Naive thymus-derived CD4-positive, alpha-beta T cell (primary cell): ENCODE measurements at regions of chr1 and their contacts with region 1.

Region 1: GRCh38 chr1:58783993-58784757 is at the start of gene JUN:
- DNase-seq: peak; percentile 94 to 100 (median 98)
- ATAC-seq: peak; percentile 82
- H3K4me3 ChIP-seq: peak within 1 kb of the TSS; percentile 97
- H3K4me3 Mint-ChIP-seq: peak within 1 kb of the TSS; percentile 91 to 100 (median 95)
- H3K27ac ChIP-seq: peak within 1 kb of the TSS; percentile 95
- H3K27ac Mint-ChIP-seq: peak within 1 kb of the TSS; percentile 98 to 100 (median 100)
- H3K4me1 ChIP-seq: peaks cover 13 to 16% of the 10 kb centered on the region in 2 donors
- H3K4me1 Mint-ChIP-seq: peaks cover 7 to 49% (median 33%) of the 10 kb centered on the region in 7 donors
- H3K27me3 ChIP-seq: peaks cover 0 to 4% of the 10 kb centered on the region in 2 donors
- H3K27me3 Mint-ChIP-seq: peaks cover 0 to 5% (median 3%) of the 10 kb centered on the region in 5 donors
- total RNA-seq, gene JUN: 17.9 to 1,362 (median 41.2) TPM

Region 2: DNA sequence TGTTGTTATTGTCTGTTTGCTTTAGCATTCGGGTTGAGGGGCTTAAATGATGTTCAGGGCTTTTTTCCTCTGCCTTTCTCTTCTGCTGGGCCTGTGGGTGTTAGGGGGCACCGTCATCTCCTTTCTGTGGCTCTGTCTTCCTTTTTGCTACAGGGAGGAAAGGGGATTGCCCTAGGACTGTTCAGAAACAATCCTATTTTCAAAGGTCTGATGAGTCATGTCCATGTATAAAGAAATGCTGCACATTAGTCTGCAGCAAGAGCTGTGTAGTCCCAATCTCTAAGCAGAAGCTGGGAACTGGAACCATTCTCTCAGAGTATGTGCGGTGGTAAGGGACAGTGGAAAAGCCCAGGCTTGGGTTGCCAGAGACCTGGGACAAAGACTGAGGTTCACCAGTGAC is 699.9 kb before region 1 on chr1:
- CTCF ChIA-PET with region 1: no interaction called
- POLR2A ChIA-PET with region 1: no interaction called
- intact Hi-C with region 1: no loop called
- DNase-seq: no peak
- ATAC-seq: no peak
- H3K4me3 ChIP-seq: no peak overlapping the region
- H3K4me3 Mint-ChIP-seq: no peak overlapping the region
- H3K27ac ChIP-seq: no peak overlapping the region
- H3K27ac Mint-ChIP-seq: no peak overlapping the region
- H3K4me1 ChIP-seq: no peaks in the 10 kb centered on the region
- H3K4me1 Mint-ChIP-seq: peaks cover 0 to under 1% (median 0%) of the 10 kb centered on the region in 7 donors
- H3K27me3 ChIP-seq: no peaks in the 10 kb centered on the region
- H3K27me3 Mint-ChIP-seq: peaks cover 0 to 23% (median 13%) of the 10 kb centered on the region in 5 donors

Region 3: DNA sequence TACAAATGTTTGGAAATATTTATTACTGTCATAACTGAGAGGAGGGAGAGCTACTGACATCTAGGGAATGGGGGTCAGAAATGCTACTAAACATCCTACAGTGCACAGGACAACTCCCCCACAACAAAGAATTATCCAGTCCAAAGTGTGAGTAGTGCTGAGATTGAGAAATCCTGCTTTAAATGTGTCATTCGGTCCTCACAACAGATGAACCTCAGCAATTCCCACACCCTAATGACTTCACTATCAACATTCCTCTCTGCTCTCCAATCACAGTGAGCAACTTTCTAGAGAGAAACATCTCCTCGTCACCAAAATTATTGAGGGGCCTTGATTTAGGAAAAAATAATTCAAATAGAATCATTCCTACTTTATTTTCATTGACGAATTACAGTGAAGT is 255.7 kb before region 1 on chr1:
- CTCF ChIA-PET with region 1: no interaction called
- POLR2A ChIA-PET with region 1: no interaction called
- intact Hi-C with region 1: no loop called
- DNase-seq: no peak
- ATAC-seq: no peak
- H3K4me3 ChIP-seq: no peak overlapping the region
- H3K4me3 Mint-ChIP-seq: no peak overlapping the region
- H3K27ac ChIP-seq: no peak overlapping the region
- H3K27ac Mint-ChIP-seq: no peak overlapping the region
- H3K4me1 ChIP-seq: no peaks in the 10 kb centered on the region
- H3K4me1 Mint-ChIP-seq: peaks cover 0 to 12% (median 3%) of the 10 kb centered on the region in 7 donors
- H3K27me3 ChIP-seq: no peaks in the 10 kb centered on the region
- H3K27me3 Mint-ChIP-seq: no peaks in the 10 kb centered on the region

Region 4: DNA sequence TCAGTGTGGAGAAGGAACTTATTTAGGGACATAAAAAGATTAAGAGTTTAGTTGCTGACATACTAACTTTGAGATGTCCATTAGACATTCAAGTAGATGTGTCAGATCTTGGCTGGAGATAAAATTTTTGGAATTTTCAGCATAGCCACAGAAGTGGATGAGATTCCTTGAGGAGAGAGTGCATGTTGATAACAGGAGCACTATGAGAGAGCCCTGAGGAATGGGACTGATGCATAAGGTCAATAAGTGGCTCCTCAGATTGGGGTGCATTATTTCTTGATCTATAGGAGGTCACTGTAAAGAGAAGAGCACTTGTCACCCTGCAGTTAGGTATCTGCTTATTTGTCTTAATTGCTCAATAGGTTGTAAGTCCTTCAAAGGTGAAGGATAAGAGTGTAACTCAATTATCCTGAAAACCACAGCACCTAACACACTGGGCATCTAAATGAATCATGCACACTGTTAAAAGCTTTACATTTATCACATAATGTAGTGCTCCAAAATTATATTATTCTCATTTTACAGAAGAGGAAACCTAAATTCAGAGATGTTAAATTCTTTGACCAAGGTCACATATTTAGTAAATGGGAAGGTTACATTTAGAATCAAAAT is 155.1 kb before region 1 on chr1:
- CTCF ChIA-PET with region 1: no interaction called
- POLR2A ChIA-PET with region 1: no interaction called
- intact Hi-C with region 1: no loop called
- DNase-seq: no peak
- ATAC-seq: no peak
- H3K4me3 ChIP-seq: no peak overlapping the region
- H3K4me3 Mint-ChIP-seq: no peak overlapping the region
- H3K27ac ChIP-seq: no peak overlapping the region
- H3K27ac Mint-ChIP-seq: no peak overlapping the region
- H3K4me1 ChIP-seq: no peaks in the 10 kb centered on the region
- H3K4me1 Mint-ChIP-seq: peaks cover 0 to 4% (median 0%) of the 10 kb centered on the region in 7 donors
- H3K27me3 ChIP-seq: no peaks in the 10 kb centered on the region
- H3K27me3 Mint-ChIP-seq: peaks cover 0 to 16% (median 13%) of the 10 kb centered on the region in 5 donors

Region 5: DNA sequence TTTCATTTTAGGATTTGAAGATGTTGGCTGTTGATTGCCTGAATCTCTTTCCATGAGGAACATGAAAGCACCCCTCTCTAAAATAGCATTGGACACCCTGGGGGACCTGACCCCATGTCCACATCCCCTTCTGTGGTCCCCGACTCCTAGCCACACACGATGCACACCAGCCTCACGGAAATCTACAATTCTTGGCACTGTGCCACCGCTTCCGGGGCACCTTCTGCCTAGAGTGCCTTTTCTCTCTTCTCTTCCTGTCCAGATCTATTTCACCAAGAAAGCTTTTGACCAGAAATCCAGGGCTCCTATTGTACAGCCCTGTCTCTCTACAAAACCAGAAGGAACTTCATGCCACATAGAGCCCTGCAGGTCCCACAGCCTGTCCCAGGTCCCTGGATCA is 134.6 kb before region 1 on chr1:
- CTCF ChIA-PET with region 1: no interaction called
- POLR2A ChIA-PET with region 1: no interaction called
- intact Hi-C with region 1: no loop called
- DNase-seq: peak in 8 of 9 donors; percentile 10 to 43 (median 18)
- ATAC-seq: no peak
- H3K4me3 ChIP-seq: no peak overlapping the region
- H3K4me3 Mint-ChIP-seq: peak overlapping the region in 3 of 10 donors; percentile 21 to 44 (median 29)
- H3K27ac ChIP-seq: no peak overlapping the region
- H3K27ac Mint-ChIP-seq: peak overlapping the region in 1 of 9 donors; percentile 42
- H3K4me1 ChIP-seq: peaks cover 0 to 8% of the 10 kb centered on the region in 2 donors
- H3K4me1 Mint-ChIP-seq: peaks cover 14 to 33% (median 21%) of the 10 kb centered on the region in 7 donors
- H3K27me3 ChIP-seq: no peaks in the 10 kb centered on the region
- H3K27me3 Mint-ChIP-seq: no peaks in the 10 kb centered on the region

Region 6: GRCh38 chr1:58699011-58699762 is 85.0 kb before region 1 on chr1:
- CTCF ChIA-PET with region 1: interaction called, 4 read pairs
- POLR2A ChIA-PET with region 1: interaction called, 4 read pairs
- intact Hi-C with region 1: loop called (anchors 1 to 2 kb)
- DNase-seq: no peak
- ATAC-seq: peak; percentile 4
- H3K4me3 ChIP-seq: peak overlapping the region; percentile 80
- H3K4me3 Mint-ChIP-seq: peak overlapping the region; percentile 92 to 100 (median 98)
- H3K27ac ChIP-seq: peak overlapping the region; percentile 88
- H3K27ac Mint-ChIP-seq: peak overlapping the region; percentile 95 to 100 (median 98)
- H3K4me1 ChIP-seq: peaks cover 13 to 23% of the 10 kb centered on the region in 2 donors
- H3K4me1 Mint-ChIP-seq: peaks cover 4 to 22% (median 13%) of the 10 kb centered on the region in 7 donors
- H3K27me3 ChIP-seq: no peaks in the 10 kb centered on the region
- H3K27me3 Mint-ChIP-seq: peaks cover 0 to 3% (median 0%) of the 10 kb centered on the region in 5 donors

Region 7: DNA sequence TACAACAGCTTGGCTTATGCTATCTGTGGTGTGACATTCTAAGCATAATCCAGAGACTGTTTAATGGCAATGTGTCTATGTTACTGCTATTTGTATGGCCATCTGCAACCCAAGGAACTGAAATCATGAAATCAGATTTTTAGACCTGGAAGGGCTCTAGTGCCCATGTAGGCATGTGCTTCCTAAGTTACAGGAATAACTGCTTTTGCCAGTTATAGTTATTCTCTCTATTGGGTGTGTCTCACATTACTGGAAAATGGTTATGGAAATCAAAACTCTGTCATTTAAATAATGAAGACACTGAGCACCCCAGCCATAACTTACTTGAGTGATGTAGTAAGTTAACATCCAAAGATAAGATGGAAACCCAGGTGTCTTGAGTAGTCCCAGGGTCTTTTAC is 12.2 kb after region 1 on chr1:
- CTCF ChIA-PET with region 1: no interaction called
- POLR2A ChIA-PET with region 1: interaction called, 3 read pairs
- intact Hi-C with region 1: loop called in 1 of 2 experiments (anchors 1 kb)
- DNase-seq: no peak
- ATAC-seq: no peak
- H3K4me3 ChIP-seq: no peak overlapping the region
- H3K4me3 Mint-ChIP-seq: no peak overlapping the region
- H3K27ac ChIP-seq: no peak overlapping the region
- H3K27ac Mint-ChIP-seq: no peak overlapping the region
- H3K4me1 ChIP-seq: no peaks in the 10 kb centered on the region
- H3K4me1 Mint-ChIP-seq: peaks cover 14 to 52% (median 29%) of the 10 kb centered on the region in 7 donors
- H3K27me3 ChIP-seq: no peaks in the 10 kb centered on the region
- H3K27me3 Mint-ChIP-seq: no peaks in the 10 kb centered on the region

Region 8: DNA sequence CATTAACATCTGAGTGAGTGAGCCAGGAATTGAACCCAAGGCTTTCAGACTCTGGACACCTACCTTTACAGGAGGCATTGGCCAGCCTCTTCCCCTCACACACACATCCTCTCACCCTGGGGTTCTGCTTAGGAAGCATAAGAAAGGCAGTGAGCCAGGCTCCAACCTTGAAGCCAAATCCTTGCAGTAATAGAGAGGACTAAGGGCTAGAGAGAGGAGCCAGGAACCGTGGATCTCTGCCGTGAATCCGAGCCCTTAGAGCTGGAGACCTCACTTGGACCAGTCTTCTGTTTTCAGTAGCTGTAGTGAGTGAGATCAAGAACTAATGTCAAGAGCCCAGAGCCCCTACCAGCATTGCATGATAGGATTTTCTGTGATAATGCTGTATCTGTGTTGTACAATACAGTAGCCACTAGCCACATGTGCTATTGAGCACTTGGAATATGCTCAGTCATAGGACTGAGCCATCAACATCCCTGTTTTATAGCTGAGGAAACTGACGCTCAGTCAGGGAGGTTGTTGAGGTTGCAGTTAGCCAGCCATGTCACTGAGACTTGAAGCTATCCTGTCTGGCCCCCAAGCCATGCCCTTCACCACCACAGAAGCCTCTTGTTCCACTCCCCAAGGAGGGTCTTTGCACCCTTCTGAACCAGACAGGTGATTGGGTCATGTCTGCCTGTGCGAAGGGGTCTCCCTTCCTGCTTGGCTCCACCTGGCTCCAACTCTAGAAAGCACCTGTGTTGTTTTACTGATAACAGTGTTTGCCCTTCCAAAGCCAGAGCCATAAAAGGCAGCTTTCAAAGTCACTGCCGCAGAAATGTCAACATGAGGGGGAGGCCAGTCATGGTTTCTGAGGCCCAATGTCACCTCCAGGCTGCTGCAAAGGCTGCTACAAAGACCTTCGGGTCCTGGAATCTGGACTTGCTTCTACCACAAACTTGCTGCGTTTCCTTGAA is 100.8 kb after region 1 on chr1:
- CTCF ChIA-PET with region 1: no interaction called
- POLR2A ChIA-PET with region 1: interaction called, 4 read pairs
- intact Hi-C with region 1: loop called in 1 of 2 experiments (anchors 5 kb)
- DNase-seq: peak in 3 of 9 donors; percentile 14 to 16 (median 16)
- ATAC-seq: no peak
- H3K4me3 ChIP-seq: no peak overlapping the region
- H3K4me3 Mint-ChIP-seq: peak overlapping the region in 8 of 10 donors; percentile 26 to 73 (median 64)
- H3K27ac ChIP-seq: peak overlapping the region; percentile 6
- H3K27ac Mint-ChIP-seq: peak overlapping the region; percentile 28 to 87 (median 80)
- H3K4me1 ChIP-seq: peaks cover 21 to 22% of the 10 kb centered on the region in 2 donors
- H3K4me1 Mint-ChIP-seq: peaks cover 34 to 62% (median 56%) of the 10 kb centered on the region in 7 donors
- H3K27me3 ChIP-seq: no peaks in the 10 kb centered on the region
- H3K27me3 Mint-ChIP-seq: no peaks in the 10 kb centered on the region

Region 9: DNA sequence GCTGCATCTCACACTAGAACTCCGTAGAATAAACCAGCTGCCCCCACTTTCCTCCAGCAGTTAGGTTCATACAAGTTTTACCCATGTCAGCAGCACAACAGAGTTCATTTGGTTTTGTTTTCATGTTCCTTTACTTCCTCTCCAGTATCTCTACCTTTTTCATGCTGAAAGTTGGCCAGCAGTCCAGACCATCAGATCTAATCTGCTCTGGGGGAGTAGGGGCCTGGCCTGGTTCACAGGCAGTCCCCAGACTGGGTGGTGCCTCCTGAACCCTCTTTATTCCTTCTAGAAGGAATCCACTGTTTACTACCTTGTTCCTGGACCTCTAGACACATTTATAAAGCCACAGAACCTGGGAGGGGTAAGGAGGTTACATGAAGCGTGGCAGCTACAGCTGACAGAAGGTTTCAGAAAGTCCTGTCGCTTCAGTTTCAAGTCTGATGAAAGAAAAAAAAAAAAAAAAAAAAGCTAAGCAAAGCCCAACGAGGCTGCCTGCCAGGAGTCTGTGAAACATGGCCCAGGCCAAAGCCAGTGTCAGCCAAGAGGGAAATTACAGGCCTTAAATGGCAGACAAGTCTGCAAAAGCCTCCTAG is 184.3 kb after region 1 on chr1:
- CTCF ChIA-PET with region 1: no interaction called
- POLR2A ChIA-PET with region 1: interaction called, 3 read pairs
- intact Hi-C with region 1: loop called (anchors 1 to 2 kb)
- DNase-seq: peak in 6 of 9 donors; percentile 34 to 66 (median 56)
- ATAC-seq: peak; percentile 66
- H3K4me3 ChIP-seq: no peak overlapping the region
- H3K4me3 Mint-ChIP-seq: peak overlapping the region; percentile 55 to 84 (median 70)
- H3K27ac ChIP-seq: peak overlapping the region; percentile 72
- H3K27ac Mint-ChIP-seq: peak overlapping the region; percentile 91 to 100 (median 96)
- H3K4me1 ChIP-seq: peaks cover 16 to 28% of the 10 kb centered on the region in 2 donors
- H3K4me1 Mint-ChIP-seq: peaks cover 13 to 73% (median 41%) of the 10 kb centered on the region in 7 donors
- H3K27me3 ChIP-seq: no peaks in the 10 kb centered on the region
- H3K27me3 Mint-ChIP-seq: no peaks in the 10 kb centered on the region

Region 10: DNA sequence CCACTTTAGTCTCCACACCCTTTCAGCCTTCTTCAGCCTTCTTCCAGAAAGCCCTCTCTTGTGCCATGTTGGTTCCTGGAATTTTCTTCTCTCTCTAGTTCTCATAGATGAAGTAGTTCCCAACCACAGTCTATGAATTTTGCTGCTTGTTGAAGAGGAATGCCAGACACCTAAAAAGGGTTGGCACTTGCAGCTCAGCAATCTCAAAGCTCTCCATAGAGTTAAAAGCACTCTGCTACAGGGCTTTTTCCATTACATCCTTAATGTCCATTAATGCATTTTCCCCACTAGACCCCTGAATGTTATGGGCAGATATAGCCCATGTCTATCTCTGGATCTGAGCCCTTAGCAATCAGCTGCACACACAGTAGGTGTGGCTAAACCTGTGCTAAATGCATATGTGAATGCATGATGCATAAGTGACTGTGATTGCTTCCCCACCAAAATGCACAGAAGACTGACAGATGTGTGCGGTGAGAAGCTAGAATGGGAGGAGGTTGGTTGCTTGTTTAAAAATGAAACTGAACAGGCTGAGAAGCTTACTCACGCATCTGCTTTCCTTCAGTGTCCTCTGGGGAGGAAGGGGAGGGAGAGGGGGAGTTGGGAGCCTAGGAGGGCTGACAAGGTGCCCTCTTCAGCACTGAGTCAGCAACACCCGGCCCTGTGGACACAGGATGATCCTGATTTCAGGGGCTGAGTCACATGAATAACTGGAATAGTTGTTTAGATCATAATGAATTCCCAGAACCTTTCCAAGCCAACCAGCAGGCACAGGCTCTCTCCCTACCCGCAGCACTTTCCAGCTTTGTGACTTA is 366.6 kb after region 1 on chr1:
- CTCF ChIA-PET with region 1: no interaction called
- POLR2A ChIA-PET with region 1: interaction called, 3 read pairs
- intact Hi-C with region 1: loop called (anchors 1 to 2 kb)
- DNase-seq: peak in 1 of 9 donors; percentile 32
- ATAC-seq: no peak
- H3K4me3 ChIP-seq: no peak overlapping the region
- H3K4me3 Mint-ChIP-seq: peak overlapping the region in 2 of 10 donors; percentile 5 to 66
- H3K27ac ChIP-seq: no peak overlapping the region
- H3K27ac Mint-ChIP-seq: peak overlapping the region in 1 of 9 donors; percentile 44
- H3K4me1 ChIP-seq: peaks cover 0 to 5% of the 10 kb centered on the region in 2 donors
- H3K4me1 Mint-ChIP-seq: peaks cover 0 to 45% (median 13%) of the 10 kb centered on the region in 7 donors
- H3K27me3 ChIP-seq: no peaks in the 10 kb centered on the region
- H3K27me3 Mint-ChIP-seq: peaks cover 0 to 9% (median 5%) of the 10 kb centered on the region in 5 donors

Region 11: DNA sequence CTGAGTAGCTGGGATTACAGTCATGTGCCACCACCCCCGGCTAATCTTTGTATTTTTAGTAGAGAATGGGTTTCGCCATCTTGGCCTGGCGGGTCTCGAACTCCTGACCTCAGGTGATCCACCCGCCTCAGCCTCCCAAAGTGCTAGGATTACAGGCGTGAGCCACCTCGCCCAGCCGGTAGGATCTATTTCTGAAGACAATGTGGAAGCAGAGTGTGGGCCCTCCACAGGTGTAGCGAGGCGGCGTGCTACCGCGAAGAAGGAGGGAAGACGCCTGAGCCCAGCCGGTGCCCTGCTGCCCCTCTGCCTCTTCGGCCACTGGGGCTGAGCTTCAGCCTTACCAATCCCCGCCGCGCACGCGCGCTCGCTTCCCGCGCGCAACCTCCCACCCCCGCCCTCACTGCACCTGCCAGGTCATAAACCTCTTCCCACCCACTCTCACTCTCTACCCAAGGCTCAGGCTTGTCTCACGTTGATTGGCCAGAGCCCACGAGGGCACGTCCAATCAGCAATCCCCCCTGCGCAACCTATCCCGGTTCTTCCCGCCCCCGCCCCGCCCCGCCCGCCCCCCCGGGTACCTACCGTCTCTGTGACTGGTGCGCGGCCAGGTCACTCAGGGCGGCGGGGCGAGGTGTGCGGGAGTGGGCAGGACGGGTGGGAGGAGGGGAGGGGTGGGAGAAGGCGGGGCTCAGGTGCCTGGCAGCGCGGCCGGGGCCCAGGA is 1030.2 kb after region 1 on chr1:
- CTCF ChIA-PET with region 1: no interaction called
- POLR2A ChIA-PET with region 1: interaction called, 8 read pairs
- intact Hi-C with region 1: loop called in 1 of 2 experiments (anchors 1 kb)
- DNase-seq: peak; percentile 65 to 95 (median 90)
- ATAC-seq: peak; percentile 95
- H3K4me3 ChIP-seq: peak overlapping the region; percentile 75
- H3K4me3 Mint-ChIP-seq: peak overlapping the region in 3 of 10 donors; percentile 90 to 92 (median 91)
- H3K27ac ChIP-seq: peak overlapping the region; percentile 91
- H3K27ac Mint-ChIP-seq: peak overlapping the region in 5 of 9 donors; percentile 72 to 95 (median 88)
- H3K4me1 ChIP-seq: peaks cover 0 to 23% of the 10 kb centered on the region in 2 donors
- H3K4me1 Mint-ChIP-seq: peaks cover under 1 to 8% (median 6%) of the 10 kb centered on the region in 7 donors
- H3K27me3 ChIP-seq: no peaks in the 10 kb centered on the region
- H3K27me3 Mint-ChIP-seq: peaks cover 6 to 25% (median 19%) of the 10 kb centered on the region in 5 donors